Heart left ventricle (tissue), 16 donors: ENCODE measurements at regions of chr18 and their contacts with region 1.

Region 1: DNA sequence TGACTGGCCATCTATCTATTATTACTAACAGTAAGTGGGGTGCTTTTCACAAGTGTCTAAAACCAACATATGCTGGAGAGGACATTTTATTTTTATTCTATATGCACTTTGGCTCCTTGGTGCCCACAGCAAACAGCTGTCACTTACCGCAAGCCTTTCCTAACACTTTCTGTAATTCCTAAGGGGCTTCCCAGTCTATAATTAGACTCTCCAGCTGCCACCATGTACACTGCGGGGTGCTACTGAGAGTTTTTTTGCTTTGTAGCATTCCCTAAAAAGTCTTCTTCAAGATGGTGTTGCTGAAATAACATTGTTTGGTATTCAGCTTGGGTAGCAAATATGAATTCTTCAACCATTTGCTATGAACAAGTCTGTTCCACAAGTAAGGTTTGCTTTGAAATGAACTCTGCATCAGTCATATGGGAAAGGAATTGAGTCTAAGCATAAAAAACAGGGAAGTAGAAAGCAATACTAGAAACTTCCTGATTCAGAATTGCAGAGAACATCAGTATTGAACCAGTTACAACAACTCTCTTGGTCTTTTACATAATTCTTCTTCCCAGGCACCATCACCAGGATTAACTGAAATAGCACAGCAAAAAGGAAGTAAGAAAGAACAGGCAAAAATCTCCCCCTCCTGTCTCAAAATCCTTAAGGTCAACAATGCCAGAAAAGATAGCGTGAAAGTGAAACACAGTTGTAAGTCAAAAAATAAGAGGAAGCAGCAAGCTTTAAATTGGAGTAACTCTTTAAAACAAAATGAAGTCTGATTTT is 28.6 kb downstream of the EPB41L3 start:
- DNase-seq: no peak
- ATAC-seq: peak in 2 of 4 donors; percentile 54 to 62
- H3K4me3 ChIP-seq: peak overlapping the region in 1 of 12 donors; percentile 9
- H3K27ac ChIP-seq: peak overlapping the region in 6 of 12 donors; percentile 1 to 89 (median 38)
- H3K4me1 ChIP-seq: peaks cover 0 to 69% (median 0%) of the 10 kb centered on the region in 12 donors
- H3K27me3 ChIP-seq: no peaks in the 10 kb centered on the region
- CTCF ChIP-seq: no peak
- POLR2A ChIP-seq: no peak

Region 2: DNA sequence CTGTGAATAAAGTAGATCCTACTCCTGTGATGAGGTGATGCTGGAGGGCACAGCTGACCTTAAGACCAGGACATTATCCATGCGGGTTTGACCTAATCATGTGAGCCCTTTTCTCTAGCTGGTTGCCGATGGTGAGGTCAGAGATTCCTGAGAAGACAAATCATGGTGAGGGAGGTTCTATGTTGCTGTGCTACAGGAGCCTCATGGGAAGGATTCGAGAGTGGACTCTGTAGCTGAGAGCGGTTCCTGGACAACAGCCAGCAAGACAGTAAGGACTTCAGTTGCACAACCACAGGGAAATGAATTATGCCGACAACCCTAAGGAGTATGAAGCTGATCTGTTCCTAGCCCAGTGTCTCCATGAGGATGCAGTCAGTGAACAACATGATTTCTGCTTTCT is 51.8 kb before region 1 on chr18:
- intact Hi-C with region 1: loop called in 2 of 10 experiments (anchors 10 kb)
- DNase-seq: peak; percentile 46 to 84 (median 66)
- ATAC-seq: peak; percentile 51 to 93 (median 84)
- H3K4me3 ChIP-seq: no peak overlapping the region
- H3K27ac ChIP-seq: peak overlapping the region in 2 of 12 donors; percentile 22 to 67
- H3K4me1 ChIP-seq: peaks cover 0 to 52% (median 0%) of the 10 kb centered on the region in 12 donors
- H3K27me3 ChIP-seq: peaks cover 0 to 8% (median 0%) of the 10 kb centered on the region in 9 donors
- CTCF ChIP-seq: no peak
- POLR2A ChIP-seq: no peak